ENCODE measurements at regions of chr17 and their contacts with region 1.

Region 1: GRCh38 chr17:76868176-76868668 is at the start of gene MGAT5B:
- DNase-seq: peak; percentile 85 to 94
- H3K4me3 ChIP-seq: peak within 1 kb of the TSS; percentile 34 to 49 (median 40)
- H3K27ac ChIP-seq: no peak within 1 kb of the TSS
- H3K4me1 ChIP-seq: peaks cover 20 to 24% (median 23%) of the 10 kb centered on the region in 4 donors
- H3K27me3 ChIP-seq: peaks cover 15 to 85% (median 53%) of the 10 kb centered on the region in 3 donors
- CTCF ChIP-seq: peak in 4 of 7 experiments; percentile 46 to 92 (median 80)
- EP300 ChIP-seq: no peak
- POLR2A ChIP-seq: no peak
- total RNA-seq, gene MGAT5B: 1.7 TPM in 1 of 5 donors, not detected in the others

Region 2: GRCh38 chr17:76740329-76741118 is 127.7 kb before region 1 on chr17:
- intact Hi-C with region 1: no loop called
- DNase-seq: peak in 1 of 2 donors; percentile 62
- H3K4me3 ChIP-seq: no peak overlapping the region
- H3K27ac ChIP-seq: peak overlapping the region in 3 of 5 donors; percentile 5 to 40 (median 13)
- H3K4me1 ChIP-seq: peaks cover 22 to 35% (median 28%) of the 10 kb centered on the region in 4 donors
- H3K27me3 ChIP-seq: no peaks in the 10 kb centered on the region
- CTCF ChIP-seq: no peak
- EP300 ChIP-seq: no peak
- POLR2A ChIP-seq: no peak

Region 3: GRCh38 chr17:77054936-77055335 is 186.7 kb after region 1 on chr17:
- intact Hi-C with region 1: loop called (anchors 5 kb)
- DNase-seq: no peak
- H3K4me3 ChIP-seq: no peak overlapping the region
- H3K27ac ChIP-seq: no peak overlapping the region
- H3K4me1 ChIP-seq: peaks cover 0 to 4% (median 0%) of the 10 kb centered on the region in 4 donors
- H3K27me3 ChIP-seq: peaks cover 0 to 91% (median 28%) of the 10 kb centered on the region in 3 donors
- CTCF ChIP-seq: no peak
- EP300 ChIP-seq: no peak
- POLR2A ChIP-seq: no peak

Measured in stomach (tissue), 19 donors.